ENCODE measurements at regions of chr11 and their contacts with region 1.

Region 1: DNA sequence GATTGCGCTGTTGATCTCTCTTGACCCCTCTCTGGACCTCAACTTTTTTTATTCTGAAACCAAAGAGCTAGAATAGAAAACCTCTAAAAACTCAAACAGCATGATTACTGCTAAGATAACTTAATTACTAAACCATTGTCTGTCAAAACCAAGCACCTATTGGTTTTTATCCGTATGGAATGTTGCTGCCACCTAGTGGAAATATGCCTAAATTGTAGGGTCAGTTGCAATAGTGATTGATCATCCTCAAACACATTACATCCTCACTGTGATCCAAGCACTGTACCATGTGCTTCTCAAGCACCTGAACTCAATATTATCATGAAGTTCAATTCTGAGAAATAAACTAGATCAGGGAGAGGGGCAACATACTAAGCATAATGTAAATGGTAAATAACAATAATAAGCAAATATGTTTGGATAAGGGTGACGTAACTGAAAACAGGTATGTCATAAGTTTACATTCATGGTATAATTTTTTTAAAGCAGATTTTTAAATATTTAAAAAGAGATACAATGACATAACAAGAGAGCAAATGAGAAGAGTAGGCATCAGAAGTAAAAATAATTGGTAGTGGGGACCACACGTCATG is 3.8 kb upstream of the OR5A2 start:
- DNase-seq: peak; percentile 66
- H3K4me3 Mint-ChIP-seq: no peak overlapping the region
- H3K27ac Mint-ChIP-seq: no peak overlapping the region
- H3K4me1 Mint-ChIP-seq: no peaks in the 10 kb centered on the region
- H3K27me3 Mint-ChIP-seq: peaks cover 15% of the 10 kb centered on the region
- CTCF ChIP-seq: peak; percentile 65

Region 2: DNA sequence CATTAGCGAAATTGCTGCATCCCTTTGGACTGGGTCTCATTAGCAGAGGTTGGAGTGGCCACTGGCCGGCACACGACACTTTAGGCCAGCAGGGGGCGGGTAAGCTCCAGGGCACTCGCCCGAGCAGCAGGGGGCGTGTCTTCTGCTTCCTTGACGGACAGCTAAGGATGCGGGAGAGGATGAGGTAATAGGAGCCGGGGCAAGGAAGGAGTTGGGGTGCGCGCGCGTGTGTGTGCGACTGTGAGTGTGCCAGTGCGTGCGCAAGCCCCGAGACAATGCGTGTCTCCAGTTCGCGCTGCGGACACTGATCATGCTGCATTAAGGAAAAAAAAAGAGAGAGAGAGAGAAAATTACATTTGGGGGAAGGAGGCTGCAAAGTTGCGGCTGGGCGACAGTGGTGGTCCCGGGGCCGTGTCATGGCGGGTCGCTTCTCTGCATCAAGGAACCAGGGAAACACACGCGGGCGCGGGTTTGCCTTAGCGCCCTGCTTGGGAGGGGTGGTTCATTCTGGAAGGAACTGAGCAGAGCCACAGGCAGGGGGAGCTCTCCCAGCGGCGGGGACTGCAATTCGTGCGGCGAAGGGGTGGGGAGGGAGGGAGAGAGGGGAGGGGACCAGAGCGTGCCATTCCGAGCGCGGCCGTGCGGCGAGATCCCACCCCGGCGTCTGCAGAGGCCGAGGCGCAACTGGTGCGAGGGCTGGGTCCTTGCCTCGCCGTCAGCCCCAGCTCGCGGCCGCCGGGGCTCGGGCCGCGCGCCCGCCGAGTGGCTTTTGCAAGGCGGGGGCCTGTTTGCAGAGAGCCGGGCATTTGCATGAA is 258.3 kb before region 1 on chr11 and contains the start of gene DTX4:
- CTCF ChIA-PET with region 1: interaction called, 3 read pairs
- intact Hi-C with region 1: loop called (anchors 1 kb)
- DNase-seq: peak; percentile 96
- H3K4me3 Mint-ChIP-seq: no peak within 1 kb of the TSS
- H3K27ac Mint-ChIP-seq: peak within 1 kb of the TSS; percentile 82
- H3K4me1 Mint-ChIP-seq: peaks cover 24% of the 10 kb centered on the region
- H3K27me3 Mint-ChIP-seq: no peaks in the 10 kb centered on the region
- CTCF ChIP-seq: peak; percentile 78
- total RNA-seq, gene DTX4: 56.7 and 65.8 TPM in 2 replicates

Region 3: GRCh38 chr11:59207988-59208451 is 222.0 kb before region 1 on chr11:
- CTCF ChIA-PET with region 1: no interaction called
- intact Hi-C with region 1: loop called (anchors 2 kb)
- DNase-seq: peak; percentile 34
- H3K4me3 Mint-ChIP-seq: no peak overlapping the region
- H3K27ac Mint-ChIP-seq: peak overlapping the region; percentile 58
- H3K4me1 Mint-ChIP-seq: peaks cover 6% of the 10 kb centered on the region
- H3K27me3 Mint-ChIP-seq: no peaks in the 10 kb centered on the region
- CTCF ChIP-seq: peak; percentile 76

Region 4: DNA sequence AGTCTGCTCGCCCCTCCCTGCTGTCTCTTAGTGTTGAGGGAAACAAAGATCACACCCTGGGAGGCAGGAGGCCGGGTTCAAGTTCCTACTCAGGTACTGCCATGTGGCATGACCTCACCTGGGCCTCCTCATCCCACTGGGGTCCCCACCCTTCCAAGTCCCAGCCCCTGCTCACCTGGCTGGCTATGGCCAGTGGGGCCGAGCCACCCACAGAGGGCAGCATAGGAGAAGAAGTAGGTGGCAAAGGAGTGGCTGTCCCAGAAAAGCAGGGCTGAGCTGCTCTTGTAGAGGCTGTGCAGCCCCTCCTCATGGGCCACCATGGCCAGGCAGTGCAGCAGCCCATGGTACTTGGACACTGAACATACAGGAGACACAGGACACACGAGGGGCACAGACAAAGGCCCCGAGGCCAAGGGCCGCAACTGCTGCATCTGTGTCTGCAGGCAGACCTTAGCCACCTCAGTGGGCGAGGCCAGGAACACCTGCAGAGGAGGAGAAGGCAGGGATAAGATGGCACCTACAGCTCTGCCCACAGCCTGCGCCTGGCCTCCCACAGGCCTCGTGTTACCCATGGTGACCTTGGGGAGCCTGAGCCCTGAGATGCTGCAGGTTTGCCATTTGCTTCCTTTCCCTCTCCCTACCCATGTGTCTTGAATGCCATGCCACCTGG is 166.7 kb before region 1 on chr11:
- CTCF ChIA-PET with region 1: interaction called, 3 read pairs
- intact Hi-C with region 1: loop called (anchors 2 kb)
- DNase-seq: peak; percentile 80
- H3K4me3 Mint-ChIP-seq: no peak overlapping the region
- H3K27ac Mint-ChIP-seq: no peak overlapping the region
- H3K4me1 Mint-ChIP-seq: peaks cover 18% of the 10 kb centered on the region
- H3K27me3 Mint-ChIP-seq: no peaks in the 10 kb centered on the region
- CTCF ChIP-seq: peak; percentile 59

Region 5: GRCh38 chr11:59283825-59284772 is 145.9 kb before region 1 on chr11:
- CTCF ChIA-PET with region 1: no interaction called
- intact Hi-C with region 1: loop called (anchors 1 kb)
- DNase-seq: peak; percentile 50
- H3K4me3 Mint-ChIP-seq: no peak overlapping the region
- H3K27ac Mint-ChIP-seq: no peak overlapping the region
- H3K4me1 Mint-ChIP-seq: no peaks in the 10 kb centered on the region
- H3K27me3 Mint-ChIP-seq: peaks cover 40% of the 10 kb centered on the region
- CTCF ChIP-seq: peak; percentile 58

Region 6: GRCh38 chr11:59401262-59401552 is 28.8 kb before region 1 on chr11:
- CTCF ChIA-PET with region 1: no interaction called
- intact Hi-C with region 1: loop called (anchors 1 kb)
- DNase-seq: no peak
- H3K4me3 Mint-ChIP-seq: no peak overlapping the region
- H3K27ac Mint-ChIP-seq: no peak overlapping the region
- H3K4me1 Mint-ChIP-seq: no peaks in the 10 kb centered on the region
- H3K27me3 Mint-ChIP-seq: peaks cover 13% of the 10 kb centered on the region
- CTCF ChIP-seq: no peak

Region 7: DNA sequence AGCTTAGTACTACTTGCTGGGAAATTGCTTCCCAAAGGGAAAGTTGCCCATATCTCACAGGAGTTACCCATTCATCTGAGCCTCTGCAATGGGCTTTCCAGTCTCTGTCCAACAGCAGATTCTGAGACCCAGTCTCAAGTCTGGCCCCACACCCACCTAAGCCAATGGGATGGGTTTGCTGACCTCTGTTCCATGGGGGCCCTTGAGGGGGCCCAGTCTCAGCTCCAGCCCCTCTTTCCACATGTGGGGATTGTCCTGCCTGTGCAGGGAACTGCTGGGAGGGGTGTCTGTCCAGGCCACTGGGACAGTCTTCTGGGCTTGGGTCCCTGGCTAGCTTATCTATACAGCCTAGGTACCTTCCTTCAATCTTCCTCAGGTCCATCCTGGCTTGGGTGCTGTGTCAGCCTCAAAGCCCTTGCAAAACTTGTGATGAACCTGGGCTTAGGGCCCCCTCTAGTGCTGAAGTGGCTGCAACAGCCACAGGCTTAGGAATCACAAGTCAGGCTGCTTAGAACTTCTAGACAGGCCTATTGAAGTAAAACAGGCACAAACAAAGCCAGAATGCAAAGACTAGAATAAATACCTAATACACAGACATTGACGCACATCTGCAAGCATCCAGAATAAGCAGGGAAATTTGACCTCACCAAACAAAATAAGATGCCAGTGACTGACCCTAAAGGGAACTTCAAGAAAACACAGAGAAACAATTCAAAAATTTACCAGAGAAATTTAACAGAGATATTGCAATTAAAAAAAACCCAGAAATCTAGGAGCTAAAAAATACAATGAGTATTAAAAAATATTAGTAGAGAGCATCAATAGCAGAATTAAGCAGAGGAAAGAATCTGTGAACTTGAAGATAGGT is 250.5 kb after region 1 on chr11:
- CTCF ChIA-PET with region 1: no interaction called
- intact Hi-C with region 1: loop called (anchors 5 kb)
- DNase-seq: peak; percentile 77
- H3K4me3 Mint-ChIP-seq: no peak overlapping the region
- H3K27ac Mint-ChIP-seq: no peak overlapping the region
- H3K4me1 Mint-ChIP-seq: peaks cover 20% of the 10 kb centered on the region
- H3K27me3 Mint-ChIP-seq: no peaks in the 10 kb centered on the region
- CTCF ChIP-seq: peak; percentile 65

Measured in Calu3 (cell line).